Dorsolateral prefrontal cortex (tissue), 120 donors: ENCODE measurements at regions of chr2 and their contacts with region 1.

Region 1: DNA sequence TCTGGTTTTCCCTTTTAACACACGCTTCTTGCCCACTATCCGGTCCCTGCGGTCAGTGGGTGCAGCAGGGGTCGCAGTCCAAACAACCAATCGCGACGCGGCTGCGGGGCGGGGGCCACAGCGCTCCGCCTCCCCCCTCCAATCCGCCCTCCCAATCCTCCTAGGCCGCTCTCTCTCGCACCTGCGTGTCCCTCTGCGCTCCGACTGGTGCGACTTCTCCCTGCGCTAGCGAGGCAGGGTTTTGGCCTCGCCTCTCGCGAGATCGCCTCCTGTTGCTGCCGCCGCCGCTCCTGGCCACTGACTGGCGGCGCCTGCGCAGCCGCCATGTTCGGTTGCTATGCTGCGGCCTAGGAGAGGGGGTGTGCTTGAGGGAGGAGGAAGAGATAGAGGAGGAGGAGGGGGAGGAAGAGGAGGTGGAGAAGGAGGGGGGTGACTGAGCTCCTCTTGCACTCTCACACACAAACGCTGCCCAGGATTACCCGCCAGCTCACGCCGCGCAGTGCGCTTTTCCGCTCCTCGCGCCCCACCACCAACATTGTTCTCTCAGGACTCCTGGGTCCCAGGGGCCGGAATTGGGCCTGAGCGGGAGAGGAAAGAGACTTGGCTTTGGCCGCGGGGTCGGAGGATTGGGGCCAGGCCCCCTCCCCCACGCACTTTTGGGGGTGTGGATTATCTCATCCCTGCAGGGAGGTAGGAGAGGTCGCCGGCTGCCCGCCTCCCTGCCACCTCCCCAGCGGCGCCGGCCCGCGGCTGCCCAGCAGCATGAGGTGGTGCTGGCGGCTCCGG is at the start of gene PTPN4:
- DNase-seq: peak; percentile 73 to 95 (median 91)
- H3K4me3 ChIP-seq: peak within 1 kb of the TSS; percentile 72 to 98 (median 87)
- H3K27ac ChIP-seq: peak within 1 kb of the TSS; percentile 84 to 99 (median 96)
- H3K27me3 ChIP-seq: no peaks in the 10 kb centered on the region
- CTCF ChIP-seq: peak in 30 of 56 donors; percentile 6 to 54 (median 30)
- total RNA-seq, gene PTPN4: 78.4 to 183 (median 137) TPM

Region 2: DNA sequence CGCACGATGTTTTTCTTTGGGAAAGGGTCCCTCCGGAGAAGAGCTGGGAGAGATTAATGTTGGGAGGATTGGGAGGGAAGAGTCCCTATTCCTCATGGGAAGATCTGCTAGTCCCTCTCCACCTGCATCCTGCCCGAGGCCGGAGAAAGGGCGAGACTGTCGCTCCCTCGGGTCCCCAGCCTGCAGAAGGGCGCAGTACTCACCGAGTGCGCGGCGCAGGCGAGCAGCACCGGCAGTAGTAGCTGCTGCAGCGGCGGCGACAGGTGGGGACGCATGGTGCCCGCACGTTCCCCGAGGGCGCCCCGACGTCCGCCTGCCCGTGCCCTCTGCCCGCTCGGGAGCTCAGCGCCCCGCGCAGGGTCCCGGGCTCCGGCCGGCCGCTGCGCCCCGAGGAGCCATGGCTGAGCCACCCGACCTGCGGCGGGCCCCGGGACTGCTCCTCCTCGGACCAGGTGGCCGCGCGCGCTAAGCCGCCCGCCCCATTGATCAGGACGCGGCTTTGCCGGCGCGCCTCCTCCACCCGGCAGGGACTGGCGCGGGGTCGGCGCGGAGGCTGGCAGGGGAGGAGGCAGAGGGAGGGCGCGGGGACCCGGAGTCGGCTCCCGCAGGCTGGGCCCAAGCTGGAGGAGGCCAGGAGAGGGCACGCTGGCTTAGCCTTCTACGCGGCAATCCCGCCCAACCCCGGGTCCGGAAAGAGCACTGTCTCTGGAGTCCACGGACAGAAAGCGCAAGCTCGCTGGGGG is 235.5 kb before region 1 on chr2 and contains the start of gene SCTR:
- intact Hi-C with region 1: no loop called
- DNase-seq: no peak
- H3K4me3 ChIP-seq: peak within 1 kb of the TSS in 32 of 59 donors; percentile 4 to 45 (median 25)
- H3K27ac ChIP-seq: no peak within 1 kb of the TSS
- H3K27me3 ChIP-seq: peaks cover 0 to 54% (median 35%) of the 10 kb centered on the region in 45 donors
- CTCF ChIP-seq: no peak
- total RNA-seq, gene SCTR: 0.25 to 2.4 (median 0.74) TPM in 77 of 120 experiments, not detected in the others

Region 3: DNA sequence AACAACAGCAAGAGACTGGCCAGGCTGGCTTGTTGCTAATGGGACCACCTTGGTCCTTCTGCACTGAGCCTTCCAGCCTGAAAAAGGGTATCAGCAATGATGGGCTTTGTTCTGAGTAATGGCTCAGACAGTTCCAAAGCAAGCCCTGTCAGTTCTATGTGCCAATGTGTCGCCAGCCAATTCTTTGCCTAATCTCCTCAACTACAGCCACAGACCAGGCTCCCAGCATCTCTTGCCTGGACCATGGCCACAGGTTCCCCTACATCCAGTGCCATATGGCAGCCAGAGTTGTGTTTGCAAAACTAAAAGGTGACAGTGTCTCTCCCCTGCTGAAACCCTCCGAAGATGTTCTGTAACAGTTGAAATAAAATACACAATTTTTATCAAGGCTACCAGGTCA is 142.2 kb before region 1 on chr2:
- intact Hi-C with region 1: no loop called
- DNase-seq: no peak
- H3K4me3 ChIP-seq: no peak overlapping the region
- H3K27ac ChIP-seq: no peak overlapping the region
- H3K27me3 ChIP-seq: no peaks in the 10 kb centered on the region
- CTCF ChIP-seq: no peak

Region 4: DNA sequence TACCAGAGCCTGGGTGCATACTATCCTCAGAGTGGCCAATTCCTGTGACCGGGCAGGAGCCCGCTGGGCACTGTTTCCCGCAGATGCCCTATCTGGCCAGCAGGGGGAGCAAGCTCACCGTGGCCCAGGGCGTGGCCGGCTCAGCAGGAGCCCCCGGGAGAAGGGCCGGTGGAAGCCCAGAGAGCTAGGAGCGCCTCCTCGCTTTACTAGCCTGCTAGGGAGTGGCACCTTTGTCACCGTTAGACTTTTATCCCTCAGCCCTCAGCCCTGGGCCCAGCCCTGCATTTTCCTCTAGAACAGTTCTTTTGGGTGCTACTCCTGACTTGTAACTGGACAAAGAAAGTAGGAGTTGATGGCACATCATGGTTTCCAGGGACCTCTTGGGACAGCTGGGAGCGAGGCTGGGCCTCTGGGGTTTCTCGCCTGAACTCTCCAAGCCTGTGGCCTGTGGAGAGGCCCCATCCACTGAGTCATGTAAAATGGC is 56.7 kb before region 1 on chr2:
- intact Hi-C with region 1: loop called in 1 of 2 experiments (anchors 10 kb)
- DNase-seq: peak in 9 of 10 donors; percentile 60 to 87 (median 69)
- H3K4me3 ChIP-seq: no peak overlapping the region
- H3K27ac ChIP-seq: peak overlapping the region in 2 of 59 donors; percentile 6 to 18
- H3K27me3 ChIP-seq: no peaks in the 10 kb centered on the region
- CTCF ChIP-seq: peak; percentile 71 to 99 (median 95)

Region 5: DNA sequence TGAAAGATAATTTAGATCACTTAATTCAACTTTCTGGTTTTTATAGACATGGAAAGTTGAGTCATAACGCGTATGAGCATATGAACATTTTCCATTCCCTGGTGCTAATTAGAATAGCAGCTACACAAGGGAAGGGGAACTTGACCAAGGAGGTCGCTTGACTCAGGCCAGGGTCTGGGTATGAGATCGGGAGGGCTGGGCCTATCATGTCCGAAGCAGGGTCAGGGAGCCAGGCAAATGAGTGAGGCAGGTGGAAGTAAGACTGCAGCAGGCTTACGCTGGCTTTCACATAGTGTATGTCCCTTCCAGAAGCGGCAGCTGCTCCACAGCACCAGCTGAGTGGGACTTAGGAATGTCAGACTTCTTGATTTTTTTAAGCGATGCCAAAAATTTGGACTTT is 507.7 kb after region 1 on chr2:
- intact Hi-C with region 1: no loop called
- DNase-seq: no peak
- H3K4me3 ChIP-seq: no peak overlapping the region
- H3K27ac ChIP-seq: no peak overlapping the region
- H3K27me3 ChIP-seq: no peaks in the 10 kb centered on the region
- CTCF ChIP-seq: no peak